ENCODE measurements at regions of chr1 and their contacts with region 1.

Region 1: DNA sequence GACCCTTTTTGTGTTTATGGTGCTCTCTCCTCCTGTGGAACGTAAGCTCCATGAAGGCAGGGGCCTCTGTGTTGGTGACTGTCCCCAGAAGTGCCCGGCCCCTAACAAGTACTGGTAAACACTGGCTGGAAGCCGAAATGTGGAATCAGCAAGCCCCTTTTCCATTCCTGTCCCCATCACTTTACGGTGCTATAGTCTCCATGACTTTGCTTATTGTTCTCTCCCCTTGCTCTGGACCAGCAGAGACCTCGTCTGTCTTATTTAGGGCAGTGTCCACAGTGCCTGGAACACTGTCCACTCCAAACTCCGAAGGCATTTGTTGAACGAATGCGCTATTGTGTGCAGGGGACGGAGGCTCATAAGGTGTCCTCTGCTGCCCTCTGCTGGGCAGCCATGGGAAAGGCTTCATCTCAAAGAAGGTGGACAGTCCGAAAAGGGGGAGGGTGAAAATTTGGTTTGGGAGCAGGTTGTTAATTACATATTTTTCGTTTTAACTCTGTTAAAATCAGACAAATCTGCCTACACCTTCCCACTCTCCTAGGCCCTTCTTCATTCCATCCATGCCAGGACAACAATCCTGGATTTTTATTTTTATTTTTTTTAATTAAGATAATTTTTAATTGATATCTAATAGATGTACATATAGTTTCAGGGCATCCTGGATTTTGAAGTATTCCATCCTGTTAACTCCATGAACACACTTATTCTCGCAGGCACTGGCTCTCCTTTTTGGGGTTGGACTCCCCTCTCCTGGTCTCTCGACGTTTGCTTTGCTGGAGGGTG is 115.6 kb downstream of the PGBD5 start:
- DNase-seq: peak; percentile 73
- H3K4me3 ChIP-seq: no peak overlapping the region
- H3K27ac ChIP-seq: no peak overlapping the region
- H3K4me1 ChIP-seq: peaks cover 11% of the 10 kb centered on the region
- H3K27me3 ChIP-seq: peaks cover 27% of the 10 kb centered on the region
- CTCF ChIP-seq: peak; percentile 95

Region 2: DNA sequence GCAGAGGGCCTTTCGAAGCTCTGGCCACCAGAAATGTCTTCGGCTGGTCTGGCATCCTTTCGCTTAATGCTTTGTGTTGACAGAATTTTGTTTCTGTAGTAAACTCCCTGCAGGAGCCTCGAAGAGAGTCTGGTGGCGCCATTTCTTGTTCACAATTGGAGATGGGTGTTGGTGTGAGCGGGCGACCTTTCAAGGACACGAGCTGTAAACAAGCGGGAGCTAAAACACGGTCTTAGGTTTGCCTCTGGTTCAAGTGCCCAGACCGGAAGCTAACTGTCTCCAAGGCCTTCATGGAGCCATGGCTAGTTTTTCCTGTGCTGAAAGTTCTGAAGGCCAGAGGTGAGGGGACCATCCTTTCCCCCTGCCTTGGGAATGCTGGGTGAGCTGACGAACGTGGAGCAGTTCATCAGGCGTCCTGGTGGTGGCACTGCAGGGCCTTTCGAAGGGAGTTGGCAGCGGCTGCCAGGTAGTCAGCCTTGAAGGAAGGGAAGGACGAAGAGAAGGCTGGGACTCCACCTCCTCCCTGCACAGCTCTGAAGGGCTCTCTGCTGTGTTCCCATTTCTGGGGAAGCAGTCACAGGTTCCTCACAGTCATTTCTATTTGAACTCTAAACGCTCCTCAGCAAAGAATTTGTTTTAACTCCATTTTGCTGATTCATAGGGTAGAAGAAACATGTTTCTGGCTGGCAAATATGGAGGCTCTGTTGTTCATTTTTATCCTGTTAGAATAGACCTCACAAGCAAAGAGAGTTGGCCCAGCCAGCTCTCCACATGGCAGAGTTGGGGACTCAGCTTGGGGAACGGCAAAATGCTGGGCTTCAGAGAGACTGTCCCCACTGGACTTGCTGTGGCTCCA is 649.3 kb before region 1 on chr1:
- intact Hi-C with region 1: loop called (anchors 10 kb)
- DNase-seq: peak; percentile 77
- H3K4me3 ChIP-seq: no peak overlapping the region
- H3K27ac ChIP-seq: no peak overlapping the region
- H3K4me1 ChIP-seq: peaks cover 5% of the 10 kb centered on the region
- H3K27me3 ChIP-seq: no peaks in the 10 kb centered on the region
- CTCF ChIP-seq: peak; percentile 93

Measured in left ventricle myocardium inferior (tissue), 1 donor.